ENCODE measurements at regions of chr22 and their contacts with region 1.

Region 1: DNA sequence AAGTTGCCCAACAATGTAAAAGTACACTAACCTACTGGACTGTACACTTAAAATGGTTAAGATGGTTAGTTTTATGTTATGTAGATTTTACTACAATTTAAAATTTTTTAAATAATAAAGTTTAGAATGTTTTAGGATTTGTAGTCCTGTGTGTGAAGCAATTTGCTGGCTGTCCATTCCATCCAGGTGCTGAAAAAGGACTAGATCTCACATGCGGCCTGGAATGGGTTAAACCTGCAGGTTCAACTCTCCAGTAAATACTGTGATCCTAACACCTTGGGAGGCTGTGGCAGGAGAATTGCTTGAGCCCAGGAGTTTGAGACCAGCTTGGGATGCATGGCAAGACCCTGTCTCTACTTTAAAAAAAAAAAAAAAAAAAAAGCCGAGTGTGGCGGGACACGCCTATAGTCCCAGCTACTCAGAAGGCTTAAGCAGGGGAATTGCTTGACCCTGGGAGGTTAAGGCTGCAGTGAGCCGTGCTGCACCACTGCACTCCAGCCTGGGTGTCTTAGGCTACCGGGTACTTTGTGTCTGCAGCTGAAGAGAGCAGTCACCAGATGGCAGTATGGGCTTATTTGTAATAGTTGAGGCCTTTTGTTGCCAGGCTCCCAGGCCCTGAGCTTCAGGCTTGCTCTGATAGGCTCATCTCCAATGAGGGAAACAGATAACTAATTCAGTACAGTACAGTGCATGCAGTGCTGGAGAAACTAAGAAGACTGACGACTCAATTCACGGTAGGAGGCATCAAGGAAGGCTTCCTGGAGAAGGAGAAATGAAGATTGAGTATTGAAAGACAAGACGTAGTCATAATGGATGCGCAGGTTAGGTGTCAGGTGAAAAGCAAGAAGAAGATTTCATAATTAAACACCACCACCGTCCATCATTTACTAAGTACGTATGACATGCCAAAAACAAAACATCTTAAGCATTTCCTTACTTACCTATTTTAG is 64.7 kb upstream of the ASPHD2 start:
- DNase-seq: peak; percentile 59
- H3K4me3 ChIP-seq: no peak overlapping the region
- H3K27ac ChIP-seq: no peak overlapping the region
- H3K27me3 ChIP-seq: no peaks in the 10 kb centered on the region
- CTCF ChIP-seq: peak; percentile 81

Region 2: DNA sequence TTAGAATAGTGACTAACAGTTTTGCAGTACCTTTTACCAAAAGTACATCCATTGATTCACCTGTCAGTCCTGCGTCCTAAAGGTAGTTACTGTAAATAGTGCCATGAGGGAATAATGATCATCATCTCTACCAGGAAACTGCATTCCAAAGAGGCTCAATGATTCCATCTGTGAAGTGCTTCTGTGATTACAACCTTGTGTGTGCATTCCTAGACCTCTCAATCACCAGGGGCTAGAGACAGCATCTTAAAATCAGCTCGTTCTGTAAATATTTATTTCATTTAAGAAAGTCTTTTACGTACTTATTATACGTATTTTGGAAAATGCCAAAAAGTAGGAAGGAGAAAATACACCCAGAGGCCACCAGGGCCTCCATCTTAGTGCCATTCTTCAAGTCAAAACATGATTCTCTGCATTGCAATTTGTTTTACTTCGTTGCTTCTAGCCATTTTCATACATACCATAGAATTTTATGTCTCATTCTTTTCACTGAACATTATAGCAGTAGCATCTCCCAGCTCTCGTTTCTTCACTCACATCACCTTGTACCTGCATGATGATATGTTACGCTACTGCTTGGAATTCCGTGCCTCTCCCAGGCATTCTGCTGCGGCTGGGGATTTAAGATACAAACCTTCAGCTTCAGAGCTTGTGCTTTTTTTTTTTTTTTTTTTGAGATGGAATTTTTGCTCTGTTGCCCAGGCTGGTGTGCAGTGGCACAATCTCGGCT is 78.1 kb before region 1 on chr22:
- CTCF ChIA-PET with region 1: interaction called, 10 read pairs
- POLR2A ChIA-PET with region 1: no interaction called
- DNase-seq: no peak
- H3K4me3 ChIP-seq: no peak overlapping the region
- H3K27ac ChIP-seq: no peak overlapping the region
- H3K27me3 ChIP-seq: no peaks in the 10 kb centered on the region
- CTCF ChIP-seq: no peak

Region 3: GRCh38 chr22:26377170-26377830 is 13.0 kb after region 1 on chr22:
- CTCF ChIA-PET with region 1: interaction called, 26 read pairs
- POLR2A ChIA-PET with region 1: no interaction called
- DNase-seq: no peak
- H3K4me3 ChIP-seq: no peak overlapping the region
- H3K27ac ChIP-seq: no peak overlapping the region
- H3K27me3 ChIP-seq: peaks cover 13% of the 10 kb centered on the region
- CTCF ChIP-seq: no peak

Region 4: GRCh38 chr22:26492220-26492619 is 127.9 kb after region 1 on chr22:
- CTCF ChIA-PET with region 1: no interaction called
- POLR2A ChIA-PET with region 1: no interaction called
- DNase-seq: no peak
- H3K4me3 ChIP-seq: no peak overlapping the region
- H3K27ac ChIP-seq: no peak overlapping the region
- H3K27me3 ChIP-seq: no peaks in the 10 kb centered on the region
- CTCF ChIP-seq: no peak

Measured in AG04450 (cell line).